OCI-LY7 (cell line): ENCODE measurements at regions of chr11 and their contacts with region 1.

Region 1: GRCh38 chr11:66616379-66617154 is at the start of gene RBM14:
- DNase-seq: peak; percentile 100
- H3K4me3 ChIP-seq: peak within 1 kb of the TSS; percentile 94
- H3K27ac ChIP-seq: peak within 1 kb of the TSS; percentile 81
- H3K4me1 ChIP-seq: peaks cover 62% of the 10 kb centered on the region
- CTCF ChIP-seq: no peak
- total RNA-seq, gene RBM14: 65.8 and 94.6 TPM in 2 replicates

Region 2: DNA sequence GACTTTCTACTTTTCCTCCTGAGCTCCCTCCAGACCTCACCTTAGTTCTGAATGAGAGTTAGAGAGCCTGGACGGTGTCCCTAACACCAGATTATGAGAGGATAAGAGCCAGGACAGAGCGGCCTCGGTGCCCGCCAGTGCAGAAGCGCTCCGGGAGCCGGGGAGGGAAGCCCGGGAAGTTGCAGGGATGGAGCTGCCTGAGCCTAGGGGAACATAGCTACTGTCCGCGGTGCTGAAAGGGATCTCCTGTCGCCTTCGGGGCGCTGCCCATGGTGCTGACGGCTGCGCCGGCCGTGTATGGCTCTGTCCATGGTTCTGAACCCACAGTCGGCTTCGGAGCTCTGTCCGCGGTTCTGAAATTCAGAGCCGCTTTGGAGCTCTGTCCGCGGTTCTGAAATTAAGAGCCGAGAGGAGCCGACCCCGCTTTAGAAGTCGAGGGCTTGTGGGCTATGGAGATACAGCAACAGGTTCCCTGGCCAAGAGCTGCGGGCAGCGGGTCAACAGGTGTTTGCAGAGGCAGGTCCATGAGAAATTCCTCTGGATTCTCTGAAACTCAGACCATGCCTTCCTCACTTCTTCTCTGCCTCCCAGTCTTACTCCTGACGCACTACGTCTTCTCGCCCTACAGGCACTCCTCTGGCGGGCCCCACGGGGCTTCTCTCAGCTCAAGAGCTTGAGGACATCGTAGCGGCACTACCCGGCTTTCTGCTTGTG is 194.9 kb before region 1 on chr11:
- CTCF ChIA-PET with region 1: no interaction called
- POLR2A ChIA-PET with region 1: no interaction called
- intact Hi-C with region 1: no loop called
- DNase-seq: peak; percentile 90
- H3K4me3 ChIP-seq: no peak overlapping the region
- H3K27ac ChIP-seq: no peak overlapping the region
- H3K4me1 ChIP-seq: no peaks in the 10 kb centered on the region
- CTCF ChIP-seq: no peak

Region 3: GRCh38 chr11:66466225-66467027 is 150.1 kb before region 1 on chr11 and contains the start of gene PELI3:
- CTCF ChIA-PET with region 1: interaction called, 10 read pairs
- POLR2A ChIA-PET with region 1: no interaction called
- intact Hi-C with region 1: no loop called
- DNase-seq: peak; percentile 93
- H3K4me3 ChIP-seq: peak within 1 kb of the TSS; percentile 69
- H3K27ac ChIP-seq: peak within 1 kb of the TSS; percentile 73
- H3K4me1 ChIP-seq: peaks cover 36% of the 10 kb centered on the region
- CTCF ChIP-seq: no peak
- total RNA-seq, gene PELI3: 7.7 and 8.1 TPM in 2 replicates

Region 4: GRCh38 chr11:66545701-66546367 is 70.7 kb before region 1 on chr11 and contains the start of gene ZDHHC24:
- CTCF ChIA-PET with region 1: interaction called, 3 read pairs
- POLR2A ChIA-PET with region 1: interaction called, 4 read pairs
- intact Hi-C with region 1: loop called (anchors 5 kb)
- DNase-seq: peak; percentile 91
- H3K4me3 ChIP-seq: peak within 1 kb of the TSS; percentile 89
- H3K27ac ChIP-seq: peak within 1 kb of the TSS; percentile 79
- H3K4me1 ChIP-seq: peaks cover 33% of the 10 kb centered on the region
- CTCF ChIP-seq: no peak
- total RNA-seq, gene ZDHHC24: 11.3 and 11.9 TPM in 2 replicates

Region 5: DNA sequence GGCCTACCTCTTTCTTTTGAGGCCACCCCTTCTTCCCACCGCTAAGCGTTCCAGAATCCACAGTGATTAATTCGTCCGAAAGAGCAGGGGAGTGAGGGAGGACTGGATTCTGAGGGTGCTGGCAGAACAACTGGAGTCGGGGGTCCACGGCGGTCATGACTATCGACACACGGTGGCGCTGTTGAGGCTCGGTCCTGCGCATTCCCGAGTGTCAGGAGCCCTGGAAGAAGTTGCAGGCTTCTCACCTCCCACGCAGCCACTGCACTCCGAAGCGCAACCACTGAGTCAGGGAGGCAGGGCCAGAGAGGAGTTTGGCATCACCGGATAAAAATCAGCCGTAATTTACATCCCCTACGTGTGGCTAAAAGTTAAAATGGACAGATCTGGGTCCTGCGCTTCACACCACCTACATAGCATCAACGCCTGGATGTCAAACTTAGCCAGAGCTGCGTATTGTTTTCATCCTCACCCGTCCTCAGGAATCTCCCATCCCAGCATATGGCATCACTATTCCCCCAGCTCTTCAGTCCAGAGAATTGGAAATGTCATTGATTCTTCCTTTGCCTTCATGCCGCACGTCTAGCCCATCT is 37.5 kb before region 1 on chr11:
- CTCF ChIA-PET with region 1: no interaction called
- POLR2A ChIA-PET with region 1: interaction called, 5 read pairs
- intact Hi-C with region 1: loop called (anchors 5 kb)
- DNase-seq: peak; percentile 73
- H3K4me3 ChIP-seq: no peak overlapping the region
- H3K27ac ChIP-seq: no peak overlapping the region
- H3K4me1 ChIP-seq: no peaks in the 10 kb centered on the region
- CTCF ChIP-seq: peak; percentile 91

Region 6: DNA sequence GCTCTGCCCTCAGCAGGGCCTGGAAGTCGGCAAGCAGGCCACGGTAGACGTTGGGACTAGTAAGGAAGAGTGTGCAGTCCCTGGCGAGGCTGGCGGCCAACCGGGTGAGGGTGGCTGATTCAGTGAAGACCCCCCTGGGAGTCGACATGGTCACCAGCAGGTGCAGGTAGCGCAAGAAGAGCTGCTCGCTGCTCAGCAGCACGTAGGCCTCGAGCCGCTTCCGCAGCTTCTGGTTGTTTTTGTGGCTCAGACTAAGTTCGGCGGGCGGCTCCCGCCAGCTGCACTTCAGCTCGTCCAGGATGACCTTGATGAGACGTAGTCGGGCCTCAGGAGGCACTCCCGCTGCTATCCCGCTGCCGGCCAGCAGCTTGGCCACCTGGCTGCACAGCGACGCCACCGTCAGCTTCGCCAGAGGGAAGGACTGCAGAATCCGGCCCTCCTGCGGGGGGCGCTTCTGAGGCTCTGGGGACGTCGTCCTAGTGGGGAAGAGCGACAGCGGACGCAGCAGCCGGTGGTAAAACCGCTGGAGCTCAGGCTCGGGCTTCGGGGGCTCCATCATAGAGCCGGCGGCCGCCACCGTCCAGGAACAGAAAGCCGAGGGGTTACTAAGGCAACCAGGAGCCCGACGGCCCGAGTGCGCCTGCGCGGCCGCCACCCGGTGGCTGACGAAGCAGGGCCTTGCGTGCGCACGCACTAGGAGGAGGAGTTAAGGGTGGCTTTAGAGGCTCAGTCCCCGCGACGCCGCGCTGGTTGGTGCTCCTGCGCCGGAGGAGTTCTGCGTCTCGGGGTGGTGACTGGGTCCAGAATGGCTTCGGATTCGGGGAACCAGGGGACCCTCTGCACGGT is 23.9 kb before region 1 on chr11 and contains the starts of genes CCDC87 and CCS:
- CTCF ChIA-PET with region 1: interaction called, 6 read pairs
- POLR2A ChIA-PET with region 1: interaction called, 4 read pairs
- intact Hi-C with region 1: loop called (anchors 2 kb)
- DNase-seq: peak; percentile 97
- H3K4me3 ChIP-seq: peak within 1 kb of the TSS; percentile 73
- H3K27ac ChIP-seq: no peak within 1 kb of the TSS
- H3K4me1 ChIP-seq: peaks cover 29% of the 10 kb centered on the region
- CTCF ChIP-seq: peak; percentile 71
- total RNA-seq, gene CCDC87: 0.13 and 0.26 TPM in 2 replicates
- total RNA-seq, gene CCS: 31.7 and 32.6 TPM in 2 replicates

Region 7: GRCh38 chr11:66638177-66639065 is 21.9 kb after region 1 on chr11 and contains the start of gene RBM4:
- CTCF ChIA-PET with region 1: no interaction called
- POLR2A ChIA-PET with region 1: interaction called, 16 read pairs
- intact Hi-C with region 1: loop called (anchors 1 kb)
- DNase-seq: peak; percentile 100
- H3K4me3 ChIP-seq: peak within 1 kb of the TSS; percentile 95
- H3K27ac ChIP-seq: peak within 1 kb of the TSS; percentile 71
- H3K4me1 ChIP-seq: peaks cover 55% of the 10 kb centered on the region
- CTCF ChIP-seq: 0 out of 2 replicates have a peak, but pooled peaks have one; percentile 29
- total RNA-seq, gene RBM4: 66.0 and 93.9 TPM in 2 replicates

Region 8: GRCh38 chr11:66659763-66660162 is 43.2 kb after region 1 on chr11:
- CTCF ChIA-PET with region 1: no interaction called
- POLR2A ChIA-PET with region 1: interaction called, 12 read pairs
- intact Hi-C with region 1: no loop called
- DNase-seq: peak; percentile 47
- H3K4me3 ChIP-seq: peak overlapping the region; percentile 33
- H3K27ac ChIP-seq: peak overlapping the region; percentile 65
- H3K4me1 ChIP-seq: peaks cover 24% of the 10 kb centered on the region
- CTCF ChIP-seq: no peak